CD8-positive, alpha-beta T cell (primary cell): ENCODE measurements at regions of chr20 and their contacts with region 1.

Region 1: DNA sequence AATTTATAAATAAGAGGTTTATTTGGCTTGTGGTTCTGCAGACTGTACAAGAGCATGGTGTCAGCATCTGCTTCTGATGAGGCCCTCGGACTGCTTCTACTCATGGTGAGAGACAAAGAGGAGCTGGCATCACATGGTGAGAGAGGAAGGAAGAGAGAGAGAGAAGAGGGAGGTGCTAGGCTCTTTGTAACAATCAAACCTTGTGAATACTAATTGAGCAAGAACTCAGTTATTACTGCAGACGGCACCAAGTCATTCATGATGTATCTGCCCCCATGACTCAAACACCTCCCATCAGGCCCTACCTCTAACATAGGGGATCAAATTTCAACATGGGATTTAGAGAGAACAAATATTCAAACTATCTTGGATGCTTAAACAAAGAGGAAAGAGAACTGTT is 6.3 kb upstream of the SIRPG start:
- DNase-seq: peak in 3 of 9 experiments; percentile 34 to 58 (median 48)
- ATAC-seq: peak; percentile 34
- H3K4me3 ChIP-seq: peak overlapping the region in 1 of 2 experiments; percentile 13
- H3K4me3 Mint-ChIP-seq: peak overlapping the region; percentile 75
- H3K27ac ChIP-seq: peak overlapping the region in 1 of 2 experiments; percentile 69
- H3K27ac Mint-ChIP-seq: peak overlapping the region; percentile 91
- H3K4me1 ChIP-seq: peaks cover 93% of the 10 kb centered on the region
- H3K4me1 Mint-ChIP-seq: peaks cover 95% of the 10 kb centered on the region
- H3K27me3 ChIP-seq: no peaks in the 10 kb centered on the region
- H3K27me3 Mint-ChIP-seq: no peaks in the 10 kb centered on the region
- CTCF ChIP-seq: no peak

Region 2: GRCh38 chr20:1434571-1435336 is 229.2 kb before region 1 on chr20:
- CTCF ChIA-PET with region 1: no interaction called
- POLR2A ChIA-PET with region 1: no interaction called
- intact Hi-C with region 1: no loop called
- DNase-seq: peak; percentile 20 to 87 (median 52)
- ATAC-seq: peak; percentile 74
- H3K4me3 ChIP-seq: no peak overlapping the region
- H3K4me3 Mint-ChIP-seq: no peak overlapping the region
- H3K27ac ChIP-seq: no peak overlapping the region
- H3K27ac Mint-ChIP-seq: no peak overlapping the region
- H3K4me1 ChIP-seq: peaks cover 12% of the 10 kb centered on the region
- H3K4me1 Mint-ChIP-seq: peaks cover 21% of the 10 kb centered on the region
- H3K27me3 ChIP-seq: peaks cover 0 to 5% of the 10 kb centered on the region in 2 experiments
- H3K27me3 Mint-ChIP-seq: no peaks in the 10 kb centered on the region
- CTCF ChIP-seq: no peak

Region 3: DNA sequence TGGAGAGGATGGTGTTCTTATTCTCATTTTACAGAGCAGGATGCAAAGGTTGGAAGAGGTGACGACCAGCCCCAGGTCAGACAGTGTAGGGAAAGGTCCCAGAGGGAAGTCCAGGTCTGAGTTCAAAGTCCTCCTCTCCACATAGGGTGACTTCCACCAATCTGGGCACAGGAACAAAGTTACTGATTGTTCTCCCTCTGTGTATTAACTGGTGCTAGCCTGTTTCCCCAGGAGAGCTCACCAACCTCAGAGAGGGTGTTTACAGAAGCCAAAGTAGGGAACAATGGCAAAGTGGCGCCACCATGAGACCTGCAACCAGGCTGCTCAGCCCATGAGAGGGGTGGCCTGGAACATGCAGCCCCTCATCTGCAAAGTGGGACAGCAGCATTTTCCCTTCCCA is 27.3 kb before region 1 on chr20:
- CTCF ChIA-PET with region 1: interaction called, 4 read pairs
- POLR2A ChIA-PET with region 1: no interaction called
- intact Hi-C with region 1: loop called in 1 of 2 experiments (anchors 2 kb)
- DNase-seq: no peak
- ATAC-seq: no peak
- H3K4me3 ChIP-seq: no peak overlapping the region
- H3K4me3 Mint-ChIP-seq: no peak overlapping the region
- H3K27ac ChIP-seq: no peak overlapping the region
- H3K27ac Mint-ChIP-seq: peak overlapping the region; percentile 15
- H3K4me1 ChIP-seq: peaks cover 38% of the 10 kb centered on the region
- H3K4me1 Mint-ChIP-seq: peaks cover 67% of the 10 kb centered on the region
- H3K27me3 ChIP-seq: no peaks in the 10 kb centered on the region
- H3K27me3 Mint-ChIP-seq: no peaks in the 10 kb centered on the region
- CTCF ChIP-seq: no peak